GM10248 (cell line): ENCODE measurements at regions of chr7 and their contacts with region 1.

Region 1: GRCh38 chr7:112550468-112551060 is 69.8 kb downstream of the LSMEM1 start:
- DNase-seq: peak; percentile 57
- CTCF ChIP-seq: peak; percentile 79

Region 2: DNA sequence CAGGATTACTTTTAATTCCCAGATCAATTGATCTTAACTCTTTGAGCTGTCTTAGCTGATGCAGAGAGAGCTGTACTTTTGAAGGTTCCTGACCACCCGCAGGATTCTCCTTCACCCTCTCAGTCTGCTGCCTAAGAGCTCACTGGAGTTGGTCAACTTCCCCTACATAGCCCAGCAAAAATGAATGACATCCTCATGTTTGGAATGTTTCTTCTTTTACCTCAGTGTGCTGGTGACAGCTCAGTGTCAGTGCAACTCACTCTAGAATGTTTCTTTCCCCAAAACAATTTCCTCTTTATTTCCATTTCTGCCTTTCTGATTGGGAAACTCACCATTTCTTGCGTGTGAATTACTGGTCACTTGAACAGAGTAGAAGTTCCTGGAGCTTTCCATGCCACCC is 21.1 kb before region 1 on chr7:
- CTCF ChIA-PET with region 1: interaction called, 13 read pairs
- POLR2A ChIA-PET with region 1: no interaction called
- DNase-seq: no peak
- CTCF ChIP-seq: no peak

Region 3: DNA sequence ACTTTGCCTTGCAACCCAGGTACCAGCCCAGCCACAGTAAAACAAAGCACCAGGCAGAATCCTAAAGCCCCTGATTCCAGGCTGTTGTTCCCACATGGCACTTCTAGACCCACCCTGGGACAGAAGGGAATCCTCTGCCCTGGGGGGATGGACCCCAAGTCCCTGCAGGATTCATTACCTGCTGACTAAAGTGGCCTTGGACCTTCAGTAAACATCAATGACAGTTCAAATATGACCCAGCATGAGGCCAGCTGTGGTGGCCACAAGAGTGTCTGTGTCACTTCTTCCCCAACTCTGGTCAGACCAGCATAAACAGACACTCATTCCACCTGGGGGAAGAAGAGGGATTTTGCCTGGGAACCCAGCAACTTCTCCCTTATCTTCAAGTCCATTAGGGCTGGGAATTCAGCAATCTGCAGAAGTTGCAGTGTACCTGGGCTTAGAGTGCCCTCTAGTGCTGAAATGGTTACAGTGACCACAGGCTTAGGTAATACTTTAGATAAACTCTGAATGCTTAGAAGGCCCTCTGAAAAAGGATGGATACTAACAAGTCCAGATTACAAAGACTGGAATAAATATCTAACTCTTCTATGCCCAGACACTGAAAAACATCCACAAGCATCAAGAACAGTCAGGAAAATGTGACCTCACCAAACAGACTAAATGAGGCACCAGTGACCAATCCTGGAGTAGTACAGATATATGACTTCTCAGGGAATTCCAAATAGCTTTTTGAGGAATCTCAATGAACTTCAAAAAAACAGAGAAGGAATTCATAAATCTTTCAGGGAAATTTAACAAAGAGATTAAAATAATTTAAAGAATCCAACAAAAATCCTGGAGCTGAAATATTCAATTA is 348.1 kb after region 1 on chr7:
- CTCF ChIA-PET with region 1: interaction called, 11 read pairs
- POLR2A ChIA-PET with region 1: no interaction called
- DNase-seq: peak; percentile 47
- CTCF ChIP-seq: peak; percentile 70